OCI-LY7 (cell line): ENCODE measurements at regions of chr1 and their contacts with region 1.

Region 1: DNA sequence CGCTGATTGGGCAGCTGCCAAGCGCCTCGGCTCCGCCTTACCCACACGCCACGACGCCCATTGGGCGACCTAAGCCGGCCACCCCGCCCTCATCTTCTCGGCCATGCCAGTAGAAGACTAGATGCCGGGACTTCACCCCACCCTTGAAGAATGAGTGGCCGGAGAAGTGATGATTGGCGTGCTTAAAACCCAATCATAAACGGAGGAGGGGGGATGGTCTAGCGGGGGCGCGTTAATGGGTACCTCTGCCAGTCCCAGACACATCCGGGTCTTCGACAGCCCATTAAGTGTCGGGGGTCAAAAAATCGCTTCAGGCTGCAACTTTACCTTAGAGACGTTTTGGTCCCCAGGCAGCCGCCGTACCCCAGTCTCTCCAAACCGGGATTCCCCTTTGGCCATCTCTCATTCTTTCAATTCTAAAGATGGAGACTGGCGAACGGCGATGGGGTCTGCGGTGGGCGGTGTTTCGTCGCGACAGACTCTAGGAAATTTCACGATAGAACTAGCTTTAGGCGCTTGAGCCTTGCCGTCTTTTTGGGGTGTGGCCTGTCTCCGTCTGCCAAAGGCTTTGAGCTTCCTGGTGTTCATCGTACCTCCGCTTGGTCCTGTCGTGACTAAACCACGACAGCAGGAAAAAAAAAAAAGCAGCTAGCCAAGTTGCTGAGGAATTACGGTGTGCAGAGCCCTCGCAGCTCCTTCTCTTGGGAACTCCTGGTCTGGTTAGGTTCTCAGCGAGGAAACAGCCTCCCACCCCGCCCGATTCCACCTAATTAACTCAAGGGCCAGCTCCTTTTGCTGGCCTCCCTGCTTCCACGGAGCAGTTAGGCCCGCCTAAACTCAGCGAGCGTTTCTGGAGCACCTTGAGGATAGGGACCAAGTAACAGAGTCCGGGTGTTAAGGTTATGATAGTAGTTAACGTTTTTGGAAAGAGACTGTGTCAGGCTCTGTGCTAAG is at the start of gene GATAD2B:
- DNase-seq: peak; percentile 100
- H3K4me3 ChIP-seq: peak within 1 kb of the TSS; percentile 97
- H3K27ac ChIP-seq: peak within 1 kb of the TSS; percentile 90
- H3K4me1 ChIP-seq: peaks cover 28% of the 10 kb centered on the region
- CTCF ChIP-seq: no peak
- total RNA-seq, gene GATAD2B: 7.7 and 11.2 TPM in 2 replicates

Region 2: GRCh38 chr1:153422450-153423068 is 500.7 kb before region 1 on chr1:
- CTCF ChIA-PET with region 1: no interaction called
- POLR2A ChIA-PET with region 1: no interaction called
- intact Hi-C with region 1: no loop called
- DNase-seq: peak; percentile 64
- H3K4me3 ChIP-seq: no peak overlapping the region
- H3K27ac ChIP-seq: no peak overlapping the region
- H3K4me1 ChIP-seq: no peaks in the 10 kb centered on the region
- CTCF ChIP-seq: no peak

Region 3: DNA sequence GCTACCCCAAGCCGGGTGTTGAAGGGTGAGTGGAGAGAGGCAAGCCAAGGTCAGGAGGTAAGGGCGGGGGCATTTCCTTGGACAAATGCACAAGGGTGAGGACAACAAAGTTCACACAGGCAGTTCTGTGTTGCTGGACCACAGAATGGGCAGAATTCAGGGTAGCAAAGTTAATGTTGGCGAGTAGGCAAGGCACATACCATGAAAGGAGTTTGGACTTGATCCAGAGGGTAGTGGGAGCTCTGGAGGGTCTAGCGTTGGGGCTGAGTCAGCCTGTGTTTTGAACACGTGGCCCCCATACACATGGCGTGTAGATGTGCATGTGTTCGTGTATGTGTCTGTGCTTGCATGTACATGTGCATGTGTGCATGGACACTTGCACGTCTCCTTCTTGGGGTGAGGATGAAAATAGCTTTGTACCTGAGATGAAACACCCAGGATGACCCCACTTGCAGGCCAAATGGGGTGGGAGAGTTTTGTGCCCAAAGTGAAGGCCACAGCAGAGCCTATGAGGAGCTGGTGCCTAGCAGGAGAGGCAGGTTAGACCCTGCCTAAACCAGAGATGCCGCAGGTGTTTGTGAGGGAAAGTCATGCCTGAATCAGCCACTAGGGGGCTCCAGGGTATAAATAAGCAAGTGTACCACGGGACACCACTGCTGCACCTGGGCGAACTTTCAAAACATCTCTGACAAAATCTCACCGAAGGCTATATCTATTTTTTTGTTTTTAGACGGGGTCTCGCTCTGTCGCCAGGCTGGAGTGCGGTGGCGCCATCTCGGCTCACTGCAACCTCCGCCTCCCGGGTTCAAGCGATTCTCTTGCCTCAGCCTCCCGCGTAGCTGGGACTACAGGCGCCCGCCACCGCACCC is 126.2 kb before region 1 on chr1:
- CTCF ChIA-PET with region 1: no interaction called
- POLR2A ChIA-PET with region 1: no interaction called
- intact Hi-C with region 1: loop called (anchors 2 kb)
- DNase-seq: peak; percentile 88
- H3K4me3 ChIP-seq: no peak overlapping the region
- H3K27ac ChIP-seq: no peak overlapping the region
- H3K4me1 ChIP-seq: peaks cover 5% of the 10 kb centered on the region
- CTCF ChIP-seq: peak; percentile 83

Region 4: DNA sequence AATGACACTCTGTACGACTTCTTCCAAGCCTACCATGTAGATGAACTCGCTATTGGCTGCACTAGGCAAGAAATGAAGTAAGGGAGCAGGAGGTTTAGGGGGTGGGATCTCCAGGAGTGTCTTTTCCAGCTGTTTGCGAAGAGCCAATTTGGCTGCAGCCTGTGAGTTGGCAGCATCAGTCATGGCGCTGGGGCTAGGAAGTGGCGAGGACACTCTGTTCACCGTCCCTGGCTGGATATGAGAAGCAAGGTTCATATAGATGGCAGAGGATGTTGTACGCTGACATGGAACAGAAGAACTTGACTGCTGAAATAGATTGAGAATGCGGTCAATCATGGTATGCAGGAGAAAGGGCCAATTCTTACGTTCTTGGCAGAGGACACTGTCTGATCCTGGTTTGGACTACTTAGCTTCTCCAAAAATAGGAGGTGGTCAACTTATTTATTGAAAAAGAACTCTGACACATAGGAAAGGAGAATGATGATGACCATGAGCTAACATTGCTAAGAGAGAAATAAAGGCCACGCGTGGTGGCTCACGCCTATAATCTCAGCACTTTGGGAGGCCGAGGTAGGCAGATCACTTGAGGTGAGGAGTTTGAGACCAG is 106.9 kb before region 1 on chr1:
- CTCF ChIA-PET with region 1: no interaction called
- POLR2A ChIA-PET with region 1: interaction called, 5 read pairs
- intact Hi-C with region 1: loop called (anchors 1 kb)
- DNase-seq: no peak
- H3K4me3 ChIP-seq: no peak overlapping the region
- H3K27ac ChIP-seq: no peak overlapping the region
- H3K4me1 ChIP-seq: peaks cover 3% of the 10 kb centered on the region
- CTCF ChIP-seq: no peak

Region 5: GRCh38 chr1:153849487-153850185 is 73.6 kb before region 1 on chr1:
- CTCF ChIA-PET with region 1: no interaction called
- POLR2A ChIA-PET with region 1: interaction called, 6 read pairs
- intact Hi-C with region 1: loop called (anchors 5 kb)
- DNase-seq: peak; percentile 62
- H3K4me3 ChIP-seq: peak overlapping the region; percentile 53
- H3K27ac ChIP-seq: peak overlapping the region; percentile 96
- H3K4me1 ChIP-seq: peaks cover 75% of the 10 kb centered on the region
- CTCF ChIP-seq: no peak

Region 6: DNA sequence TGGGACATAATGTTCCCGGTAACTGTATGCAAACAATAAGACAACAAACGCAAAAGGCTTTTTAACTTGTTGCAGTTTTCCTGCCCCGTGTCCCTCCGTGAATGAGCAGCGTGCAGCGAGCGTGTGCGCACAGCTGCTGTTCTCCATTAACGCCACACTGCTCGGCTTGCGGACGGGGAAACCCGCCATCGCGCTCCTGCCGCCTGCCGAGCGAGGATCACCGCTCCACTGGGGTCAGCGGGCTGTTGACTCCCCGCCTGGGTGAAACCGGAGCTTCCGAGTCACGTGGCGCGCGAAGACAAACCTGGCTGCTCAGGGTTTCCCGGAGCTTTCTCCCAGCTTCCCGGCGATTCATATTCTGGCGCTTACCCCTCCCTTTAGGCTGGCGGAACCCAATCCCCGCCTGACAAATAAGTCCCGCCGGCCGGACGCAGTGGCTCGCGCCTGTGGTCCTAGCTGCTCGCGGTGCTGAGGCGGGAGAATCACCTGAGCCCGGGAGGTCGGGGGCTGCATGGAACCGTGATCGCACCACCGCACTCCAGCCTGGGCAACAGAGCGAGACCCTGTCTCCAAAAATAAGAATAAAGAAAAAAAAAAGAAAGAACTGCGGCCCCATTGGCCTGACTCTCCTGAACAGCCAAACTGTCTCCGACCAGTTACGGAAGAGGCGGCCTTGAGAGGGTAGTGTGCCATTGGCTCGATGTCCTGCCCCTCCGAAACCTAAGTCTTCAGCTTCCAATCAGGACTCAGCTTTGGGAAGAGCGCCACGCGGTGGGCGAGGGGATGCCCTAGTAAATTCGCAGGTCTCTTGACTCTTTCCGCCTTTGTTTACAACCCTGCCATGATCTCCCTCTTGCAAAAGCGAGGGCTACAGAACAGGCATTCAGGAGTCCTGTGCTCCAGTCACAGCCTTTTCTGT is 44.1 kb after region 1 on chr1 and contains the start of gene CREB3L4:
- CTCF ChIA-PET with region 1: no interaction called
- POLR2A ChIA-PET with region 1: interaction called, 8 read pairs
- intact Hi-C with region 1: loop called (anchors 1 kb)
- DNase-seq: peak; percentile 98
- H3K4me3 ChIP-seq: peak within 1 kb of the TSS; percentile 78
- H3K27ac ChIP-seq: peak within 1 kb of the TSS; percentile 89
- H3K4me1 ChIP-seq: peaks cover 40% of the 10 kb centered on the region
- CTCF ChIP-seq: peak; percentile 67
- total RNA-seq, gene CREB3L4: 17.0 and 17.4 TPM in 2 replicates

Region 7: DNA sequence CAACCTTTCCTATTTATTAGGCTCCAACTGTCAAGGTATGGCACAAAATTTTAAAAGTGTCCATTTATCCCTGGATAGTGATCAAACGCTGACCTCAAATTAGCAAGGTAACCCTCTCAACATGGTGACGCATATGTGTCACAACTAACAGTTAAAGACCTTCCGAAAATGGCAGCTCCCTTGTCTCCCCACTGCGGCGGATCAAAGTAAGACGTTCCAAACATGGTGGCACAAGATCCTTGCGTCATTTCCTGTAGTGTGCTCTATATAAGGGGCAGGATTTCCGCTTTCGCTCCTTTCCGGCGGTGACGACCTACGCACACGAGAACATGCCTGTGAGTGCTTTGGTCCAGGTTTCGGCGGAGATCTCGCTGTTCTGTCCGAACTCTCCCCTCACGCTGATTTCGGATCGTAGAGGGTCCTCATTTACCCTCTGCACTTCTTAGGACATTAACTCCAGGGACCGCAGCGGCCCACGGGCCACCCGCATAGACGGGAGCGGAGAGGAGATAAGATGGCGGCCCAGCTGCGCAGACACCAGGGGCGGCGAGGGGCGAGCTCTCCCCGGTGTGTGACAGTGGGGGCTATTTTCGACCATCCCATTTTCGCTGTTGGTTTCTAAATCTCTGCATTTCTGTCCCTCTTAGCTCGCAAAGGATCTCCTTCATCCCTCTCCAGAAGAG is 67.4 kb after region 1 on chr1 and contains the start of gene RPS27:
- CTCF ChIA-PET with region 1: interaction called, 5 read pairs
- POLR2A ChIA-PET with region 1: interaction called, 3 read pairs
- intact Hi-C with region 1: loop called (anchors 2 kb)
- DNase-seq: peak; percentile 99
- H3K4me3 ChIP-seq: peak within 1 kb of the TSS; percentile 81
- H3K27ac ChIP-seq: peak within 1 kb of the TSS; percentile 62
- H3K4me1 ChIP-seq: peaks cover 50% of the 10 kb centered on the region
- CTCF ChIP-seq: no peak
- total RNA-seq, gene RPS27: 4,465 and 5,738 TPM in 2 replicates